Dendritic cell treated with granulocyte-macrophage colony-stimulating factor and Interleukin-4, amounts not matched to agents 40 ng/mL and 50 ng/mL, for 4 days (primary cell): ENCODE measurements at regions of chr22 and their contacts with region 1.

Region 1: DNA sequence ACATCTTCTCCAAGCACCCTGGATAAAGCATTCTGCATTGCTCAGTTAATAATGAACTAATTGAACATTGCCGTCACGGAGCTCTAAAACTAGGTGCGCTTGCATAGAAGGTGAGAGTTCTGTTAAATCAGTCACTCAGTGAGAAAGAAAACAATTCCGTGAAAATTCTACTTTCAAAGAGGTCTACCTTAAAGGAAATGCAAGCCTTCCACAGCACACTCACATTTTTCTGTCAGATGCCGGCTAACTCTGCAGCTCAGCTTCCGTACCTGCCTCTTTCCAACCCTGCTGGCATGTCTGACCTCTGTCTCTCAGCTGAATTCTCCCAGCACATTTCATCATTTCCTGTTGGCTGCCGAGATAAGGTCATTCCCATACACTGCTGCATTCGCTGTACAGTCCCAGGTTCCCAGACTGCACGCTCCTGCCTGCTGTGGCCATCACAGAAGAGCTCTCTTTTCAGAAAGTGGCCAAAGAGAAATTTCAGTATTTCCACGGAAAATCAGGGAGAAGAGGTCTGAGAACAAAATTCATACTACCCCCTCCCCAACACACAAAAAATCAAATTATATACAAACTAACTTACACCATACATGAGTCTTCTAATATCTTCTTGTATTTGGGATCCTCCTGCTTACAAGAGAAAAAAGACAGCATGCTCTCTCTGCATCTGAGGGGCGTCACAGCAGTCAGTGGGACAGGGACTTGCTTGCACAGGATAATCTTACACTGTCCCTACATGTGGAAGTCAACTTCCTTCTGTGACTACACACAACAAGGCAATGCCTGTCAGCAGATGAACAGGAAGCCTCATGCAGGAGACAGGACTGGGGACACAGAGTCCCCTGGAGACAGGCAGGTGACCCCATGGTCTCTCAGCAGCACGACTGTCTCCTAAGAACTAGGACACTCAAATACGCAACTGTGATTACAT is 55.1 kb downstream of the PACSIN2 start:
- H3K4me3 Mint-ChIP-seq: peak overlapping the region; percentile 40
- H3K27ac Mint-ChIP-seq: peak overlapping the region; percentile 87
- H3K4me1 Mint-ChIP-seq: peaks cover 83% of the 10 kb centered on the region
- H3K27me3 Mint-ChIP-seq: no peaks in the 10 kb centered on the region

Region 2: GRCh38 chr22:42920101-42920820 is 39.6 kb before region 1 on chr22:
- intact Hi-C with region 1: loop called (anchors 5 kb)
- H3K4me3 Mint-ChIP-seq: no peak overlapping the region
- H3K27ac Mint-ChIP-seq: peak overlapping the region; percentile 62
- H3K4me1 Mint-ChIP-seq: peaks cover 70% of the 10 kb centered on the region
- H3K27me3 Mint-ChIP-seq: no peaks in the 10 kb centered on the region